A549 (cell line): ENCODE measurements at regions of chr1 and their contacts with region 1.

Region 1: DNA sequence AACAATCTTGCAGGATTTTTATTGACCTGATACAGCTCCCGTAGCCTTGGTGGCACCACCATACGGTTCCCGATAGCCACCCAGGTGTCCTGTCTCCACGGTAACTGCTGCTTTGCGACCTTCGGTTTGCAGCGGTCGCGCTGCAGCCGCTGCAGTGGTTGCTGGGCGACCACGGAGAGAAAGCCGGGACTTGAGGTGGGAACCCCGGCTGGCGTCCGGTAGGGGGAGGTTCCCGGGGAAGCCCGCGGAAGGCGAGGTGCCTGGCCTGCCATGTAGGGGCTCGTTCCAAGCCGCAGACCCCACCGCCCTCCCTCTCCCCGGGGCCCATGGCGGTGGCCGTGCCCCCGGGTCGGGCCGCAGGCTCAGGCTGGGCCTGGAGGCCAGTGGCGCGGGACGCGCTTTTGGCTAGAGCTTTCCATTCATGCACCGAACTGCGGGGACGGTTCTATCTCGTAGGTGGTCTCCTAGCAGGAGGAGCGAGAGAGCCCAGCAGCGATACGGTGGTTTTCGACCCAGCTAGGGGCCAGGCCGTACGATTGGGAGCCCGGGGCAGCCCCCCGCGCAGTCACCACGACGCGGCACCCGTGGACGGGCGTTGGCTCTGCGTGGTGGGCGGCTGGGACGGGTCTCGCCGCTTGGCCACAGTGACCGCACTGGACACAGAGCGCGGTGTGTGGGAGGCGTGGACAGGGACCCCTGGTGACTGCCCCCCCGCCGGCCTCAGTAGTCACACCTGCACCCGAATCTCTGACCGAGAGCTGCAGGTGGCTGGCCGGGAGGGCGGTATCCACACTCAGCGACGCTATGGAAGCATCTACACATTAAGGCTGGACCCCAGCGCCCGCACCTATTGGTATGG is at the start of gene KLHDC9:
- DNase-seq: peak; percentile 64 to 75
- ATAC-seq: peak; percentile 73 to 78
- H3K4me3 ChIP-seq: peak within 1 kb of the TSS; percentile 41
- H3K27ac ChIP-seq: peak within 1 kb of the TSS; percentile 59 to 86
- H3K4me1 ChIP-seq: peaks cover 11% of the 10 kb centered on the region; the same call in 2 of the 3 replicates
- CTCF ChIP-seq: no peak
- EP300 ChIP-seq: no peak
- POLR2A ChIP-seq: no peak
- RAD21 ChIP-seq: no peak
- polyA plus RNA-seq, gene KLHDC9: 3.6 and 4.6 TPM in 2 replicates

Region 2: GRCh38 chr1:160997323-160998038 is 101.0 kb before region 1 on chr1:
- CTCF ChIA-PET with region 1: interaction called, 176 read pairs
- POLR2A ChIA-PET with region 1: interaction called, 3 read pairs
- DNase-seq: peak; percentile 80 to 86
- ATAC-seq: peak; percentile 88 to 92
- H3K4me3 ChIP-seq: no peak overlapping the region
- H3K27ac ChIP-seq: peak overlapping the region; percentile 28 to 77; a peak in 4 of 6 replicates
- H3K4me1 ChIP-seq: peaks cover 28% of the 10 kb centered on the region
- CTCF ChIP-seq: peak; percentile 59
- EP300 ChIP-seq: no peak
- POLR2A ChIP-seq: no peak
- RAD21 ChIP-seq: peak; percentile 67 to 69

Region 3: DNA sequence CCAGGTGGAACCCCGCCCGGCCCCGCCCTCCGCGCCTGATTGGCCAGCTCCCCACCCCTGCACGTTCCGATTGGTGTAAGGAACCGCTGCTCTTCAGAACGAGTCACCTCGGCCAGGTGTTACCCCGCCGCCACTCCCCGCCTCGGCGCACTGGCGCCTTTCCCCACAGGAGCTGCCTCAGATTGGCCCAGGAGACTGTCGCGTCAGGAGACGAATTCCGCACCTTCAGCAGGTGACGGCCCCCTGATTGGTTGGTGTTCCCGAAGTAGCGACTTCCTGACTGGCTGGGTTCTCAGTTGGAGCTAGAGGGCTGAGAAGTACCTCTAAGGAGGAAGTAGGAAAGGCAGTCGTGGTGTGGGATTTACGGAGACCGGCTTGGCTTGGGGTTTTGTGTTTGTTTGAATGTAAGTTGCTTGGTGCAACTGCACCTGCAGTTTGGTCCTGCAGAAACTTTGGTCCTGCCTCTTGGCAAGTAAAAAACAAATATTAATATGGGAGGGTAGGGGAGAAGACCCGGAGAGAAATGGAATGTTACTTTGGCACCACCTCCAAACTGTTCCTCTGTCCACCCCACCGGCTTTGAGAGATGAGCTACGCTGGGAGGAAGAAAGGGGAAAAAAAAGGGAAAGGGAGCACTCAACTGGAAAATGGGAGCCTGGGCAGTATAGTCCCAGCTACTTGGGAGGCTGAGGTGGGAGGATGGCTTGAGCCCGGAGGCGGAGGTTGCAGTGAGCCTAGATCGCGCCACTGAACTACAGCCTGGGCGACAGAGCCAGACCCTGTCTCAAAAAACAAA is 77.1 kb before region 1 on chr1:
- CTCF ChIA-PET with region 1: interaction called, 22 read pairs
- POLR2A ChIA-PET with region 1: interaction called, 6 read pairs
- DNase-seq: peak; percentile 92 to 99
- ATAC-seq: peak; percentile 93 to 94
- H3K4me3 ChIP-seq: peak overlapping the region; percentile 67
- H3K27ac ChIP-seq: peak overlapping the region; percentile 82 to 84
- H3K4me1 ChIP-seq: peaks cover 53% of the 10 kb centered on the region
- CTCF ChIP-seq: no peak
- EP300 ChIP-seq: no peak
- POLR2A ChIP-seq: peak; percentile 50
- RAD21 ChIP-seq: no peak

Region 4: DNA sequence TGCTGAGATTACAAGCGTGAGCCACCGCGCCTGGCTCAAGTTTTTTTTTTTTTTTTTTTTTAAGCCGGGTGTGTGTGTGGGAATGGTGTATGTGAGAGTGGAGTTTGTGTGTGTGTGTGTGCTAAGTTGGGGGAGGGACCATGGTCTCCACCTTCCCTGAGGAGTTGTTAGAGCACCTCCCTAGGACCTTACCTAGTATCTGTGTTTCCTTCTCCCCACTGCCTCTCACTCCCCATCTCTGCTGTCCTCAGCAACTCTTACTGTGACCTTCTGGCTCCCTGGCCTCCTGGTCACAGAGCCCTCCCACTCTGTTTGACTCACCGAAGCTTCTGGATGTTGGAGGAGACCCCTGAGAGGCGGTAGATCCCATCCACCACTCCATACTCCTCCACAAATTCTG is 39.1 kb before region 1 on chr1:
- CTCF ChIA-PET with region 1: interaction called, 319 read pairs
- POLR2A ChIA-PET with region 1: no interaction called
- DNase-seq: no peak
- ATAC-seq: peak in 1 of 2 experiments; percentile 28; a peak in 1 of 6 replicates
- H3K4me3 ChIP-seq: no peak overlapping the region
- H3K27ac ChIP-seq: no peak overlapping the region
- H3K4me1 ChIP-seq: no peaks in the 10 kb centered on the region
- CTCF ChIP-seq: no peak
- EP300 ChIP-seq: no peak
- POLR2A ChIP-seq: no peak
- RAD21 ChIP-seq: no peak

Region 5: GRCh38 chr1:161117759-161118581 is 19.5 kb after region 1 on chr1 and contains the starts of genes NIT1 and PFDN2:
- CTCF ChIA-PET with region 1: interaction called, 40 read pairs
- POLR2A ChIA-PET with region 1: interaction called, 5 read pairs
- DNase-seq: peak; percentile 85 to 88
- ATAC-seq: peak; percentile 83 to 88
- H3K4me3 ChIP-seq: peak within 1 kb of the TSS; percentile 83
- H3K27ac ChIP-seq: peak within 1 kb of the TSS; percentile 87 to 97
- H3K4me1 ChIP-seq: peaks cover 55% of the 10 kb centered on the region
- CTCF ChIP-seq: no peak
- EP300 ChIP-seq: no peak
- POLR2A ChIP-seq: peak; percentile 93
- RAD21 ChIP-seq: no peak
- polyA plus RNA-seq, gene NIT1: 29.9 and 38.6 TPM in 2 replicates
- polyA plus RNA-seq, gene PFDN2: 106 and 187 TPM in 2 replicates

Region 6: GRCh38 chr1:161159087-161159912 is 60.9 kb after region 1 on chr1 and contains the start of gene USP21:
- CTCF ChIA-PET with region 1: interaction called, 10 read pairs
- POLR2A ChIA-PET with region 1: no interaction called
- DNase-seq: peak; percentile 89 to 98
- ATAC-seq: peak; percentile 86 to 94
- H3K4me3 ChIP-seq: peak within 1 kb of the TSS; percentile 97
- H3K27ac ChIP-seq: peak within 1 kb of the TSS; percentile 98
- H3K4me1 ChIP-seq: peaks cover 14% of the 10 kb centered on the region
- CTCF ChIP-seq: no peak
- EP300 ChIP-seq: no peak
- POLR2A ChIP-seq: peak; percentile 64
- RAD21 ChIP-seq: no peak
- polyA plus RNA-seq, gene USP21: 22.6 and 26.3 TPM in 2 replicates

Region 7: DNA sequence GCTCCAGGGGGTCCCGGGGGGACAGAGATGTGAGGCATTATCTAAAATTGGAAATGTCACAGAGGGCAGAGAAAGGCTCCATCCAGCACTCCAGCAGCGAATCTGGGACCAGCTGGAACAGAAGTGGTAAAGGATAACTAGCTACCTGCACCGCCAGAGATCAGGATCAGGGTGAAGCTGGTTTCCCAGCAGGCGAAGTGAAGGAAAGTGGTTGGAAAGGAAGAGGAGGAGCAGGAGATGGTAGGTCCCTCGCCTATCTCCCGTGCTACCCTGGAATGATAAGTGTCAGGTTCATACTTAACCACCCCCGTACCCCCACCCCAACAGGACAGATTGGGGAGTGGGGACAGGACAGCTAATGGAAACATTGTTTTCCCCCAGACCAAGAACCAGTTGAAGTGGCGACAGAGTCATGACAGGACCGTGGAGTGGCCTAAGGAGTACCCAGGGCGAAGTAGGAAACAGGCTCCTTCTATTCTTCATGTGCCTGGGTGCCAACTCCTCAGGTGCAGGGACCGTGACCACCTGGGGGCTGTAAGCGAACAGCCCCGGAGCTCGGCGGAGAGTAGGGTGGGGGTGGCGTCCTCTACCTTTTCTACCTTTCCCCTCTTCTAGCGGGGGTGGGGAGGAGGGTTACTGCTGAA is 78.2 kb after region 1 on chr1:
- CTCF ChIA-PET with region 1: no interaction called
- POLR2A ChIA-PET with region 1: no interaction called
- DNase-seq: no peak
- ATAC-seq: peak; percentile 27 to 41; a peak in 4 of 6 replicates
- H3K4me3 ChIP-seq: peak overlapping the region; percentile 63
- H3K27ac ChIP-seq: peak overlapping the region; percentile 83 to 91
- H3K4me1 ChIP-seq: peaks cover 11% of the 10 kb centered on the region; the same call in 2 of the 3 replicates
- CTCF ChIP-seq: no peak
- EP300 ChIP-seq: no peak
- POLR2A ChIP-seq: no peak
- RAD21 ChIP-seq: no peak

Region 8: GRCh38 chr1:161399257-161399998 is 301.0 kb after region 1 on chr1:
- CTCF ChIA-PET with region 1: no interaction called
- POLR2A ChIA-PET with region 1: no interaction called
- DNase-seq: peak; percentile 93 to 96
- ATAC-seq: peak; percentile 85 to 87
- H3K4me3 ChIP-seq: peak overlapping the region; percentile 68
- H3K27ac ChIP-seq: peak overlapping the region; percentile 94 to 97
- H3K4me1 ChIP-seq: peaks cover 21% of the 10 kb centered on the region
- CTCF ChIP-seq: no peak; the same call in 2 of the 3 replicates
- EP300 ChIP-seq: no peak
- POLR2A ChIP-seq: peak; percentile 73
- RAD21 ChIP-seq: no peak; a peak in 1 of 5 replicates